A673 (cell line): ENCODE measurements at regions of chr12 and their contacts with region 1.

Region 1: GRCh38 chr12:117367011-117367638 is 5.7 kb upstream of the NOS1 start:
- DNase-seq: peak; percentile 78
- H3K4me3 ChIP-seq: no peak overlapping the region
- H3K27ac ChIP-seq: no peak overlapping the region
- H3K4me1 ChIP-seq: peaks cover 7% of the 10 kb centered on the region
- H3K27me3 ChIP-seq: peaks cover 3% of the 10 kb centered on the region
- CTCF ChIP-seq: peak; percentile 90

Region 2: GRCh38 chr12:115983226-115983798 is 1383.8 kb before region 1 on chr12:
- CTCF ChIA-PET with region 1: no interaction called
- POLR2A ChIA-PET with region 1: no interaction called
- intact Hi-C with region 1: no loop called
- DNase-seq: peak; percentile 42
- H3K4me3 ChIP-seq: no peak overlapping the region
- H3K27ac ChIP-seq: no peak overlapping the region
- H3K4me1 ChIP-seq: no peaks in the 10 kb centered on the region
- H3K27me3 ChIP-seq: no peaks in the 10 kb centered on the region
- CTCF ChIP-seq: peak; percentile 48

Region 3: DNA sequence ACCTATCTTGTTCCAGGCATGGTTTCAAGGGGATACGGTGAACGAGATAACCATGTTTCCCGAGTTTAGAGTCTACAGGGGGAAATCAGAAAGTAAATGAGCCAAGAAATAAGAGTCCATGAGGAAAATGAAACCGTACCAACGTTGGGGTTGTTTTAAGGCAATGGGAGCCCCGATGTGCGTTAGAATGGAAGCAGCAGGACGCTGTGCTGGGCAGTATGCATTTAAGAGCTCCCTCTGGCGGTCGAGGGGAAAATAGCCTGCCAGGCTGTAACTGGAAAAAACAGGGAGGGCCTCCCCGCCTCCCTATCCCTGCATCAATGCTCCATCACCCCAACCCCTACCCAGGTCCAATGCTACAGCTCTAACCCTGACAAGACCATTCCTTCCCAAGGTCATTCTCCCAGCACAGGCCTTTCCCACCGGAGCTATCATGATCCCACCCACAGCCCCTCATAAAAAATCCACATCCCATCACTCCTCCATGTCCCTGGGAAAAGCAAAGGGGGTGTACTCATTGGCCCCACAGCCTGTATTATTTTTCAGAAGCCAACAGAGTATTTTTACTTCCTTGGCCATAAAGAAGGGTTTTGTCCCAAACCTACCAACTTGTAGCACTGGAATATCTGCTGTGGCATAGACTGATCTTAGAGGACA is 220.6 kb after region 1 on chr12:
- CTCF ChIA-PET with region 1: interaction called, 16 read pairs
- POLR2A ChIA-PET with region 1: no interaction called
- intact Hi-C with region 1: loop called (anchors 1 kb)
- DNase-seq: peak; percentile 63
- H3K4me3 ChIP-seq: no peak overlapping the region
- H3K27ac ChIP-seq: no peak overlapping the region
- H3K4me1 ChIP-seq: no peaks in the 10 kb centered on the region
- H3K27me3 ChIP-seq: peaks cover 22% of the 10 kb centered on the region
- CTCF ChIP-seq: peak; percentile 87

Region 4: GRCh38 chr12:117671734-117672133 is 304.6 kb after region 1 on chr12:
- CTCF ChIA-PET with region 1: interaction called, 6 read pairs
- POLR2A ChIA-PET with region 1: no interaction called
- intact Hi-C with region 1: loop called (anchors 2 kb)
- DNase-seq: peak; percentile 70
- H3K4me3 ChIP-seq: no peak overlapping the region
- H3K27ac ChIP-seq: no peak overlapping the region
- H3K4me1 ChIP-seq: no peaks in the 10 kb centered on the region
- H3K27me3 ChIP-seq: peaks cover 33% of the 10 kb centered on the region
- CTCF ChIP-seq: peak; percentile 79

Region 5: GRCh38 chr12:117836999-117837736 is 470.0 kb after region 1 on chr12:
- CTCF ChIA-PET with region 1: interaction called, 16 read pairs
- POLR2A ChIA-PET with region 1: no interaction called
- intact Hi-C with region 1: loop called (anchors 1 kb)
- DNase-seq: peak; percentile 82
- H3K4me3 ChIP-seq: no peak overlapping the region
- H3K27ac ChIP-seq: no peak overlapping the region
- H3K4me1 ChIP-seq: no peaks in the 10 kb centered on the region
- H3K27me3 ChIP-seq: peaks cover 34% of the 10 kb centered on the region
- CTCF ChIP-seq: peak; percentile 99

Region 6: GRCh38 chr12:117850048-117850447 is 482.9 kb after region 1 on chr12:
- CTCF ChIA-PET with region 1: interaction called, 7 read pairs
- POLR2A ChIA-PET with region 1: no interaction called
- intact Hi-C with region 1: loop called (anchors 5 kb)
- DNase-seq: peak; percentile 60
- H3K4me3 ChIP-seq: no peak overlapping the region
- H3K27ac ChIP-seq: no peak overlapping the region
- H3K4me1 ChIP-seq: no peaks in the 10 kb centered on the region
- H3K27me3 ChIP-seq: peaks cover 24% of the 10 kb centered on the region
- CTCF ChIP-seq: peak; percentile 88

Region 7: DNA sequence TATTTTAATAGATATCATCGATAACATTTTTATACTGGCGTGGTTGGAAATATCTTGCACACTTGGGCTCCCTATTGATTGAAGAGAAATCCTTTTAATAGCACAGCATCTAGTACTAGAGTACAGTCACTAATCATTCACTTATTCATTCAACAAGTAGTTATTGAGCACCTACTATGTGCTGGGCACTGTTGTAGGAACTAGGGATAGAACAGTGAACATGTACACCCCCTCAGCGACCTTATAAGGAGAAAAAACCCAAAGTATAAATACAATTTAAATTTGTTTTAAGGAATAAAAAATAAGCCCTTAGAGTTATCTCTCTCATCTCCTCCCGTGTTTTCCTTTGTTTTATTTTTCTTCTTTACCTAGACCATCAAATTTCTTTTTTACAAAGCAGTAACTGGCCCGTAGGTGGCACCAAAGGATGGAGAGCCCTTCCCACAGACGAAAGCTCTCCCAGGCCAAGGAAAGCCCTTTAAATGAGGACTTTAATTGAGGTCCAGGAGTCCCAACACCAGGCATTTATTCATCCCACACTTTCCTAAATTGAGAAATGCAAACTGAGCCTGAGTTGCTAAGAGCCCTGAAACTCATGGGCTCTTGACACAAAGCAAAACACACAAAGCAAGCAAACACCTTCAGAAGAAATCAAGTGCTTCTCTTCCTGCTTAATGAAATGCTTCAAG is 797.8 kb after region 1 on chr12:
- CTCF ChIA-PET with region 1: interaction called, 20 read pairs
- POLR2A ChIA-PET with region 1: no interaction called
- intact Hi-C with region 1: no loop called
- DNase-seq: peak; percentile 22
- H3K4me3 ChIP-seq: no peak overlapping the region
- H3K27ac ChIP-seq: no peak overlapping the region
- H3K4me1 ChIP-seq: no peaks in the 10 kb centered on the region
- H3K27me3 ChIP-seq: no peaks in the 10 kb centered on the region
- CTCF ChIP-seq: peak; percentile 51